ENCODE measurements at regions of chr1 and their contacts with region 1.

Region 1: GRCh38 chr1:88983791-88984559 is 8.5 kb downstream of the KYAT3 start:
- DNase-seq: peak; percentile 73
- H3K4me3 Mint-ChIP-seq: peak overlapping the region; percentile 59
- H3K27ac Mint-ChIP-seq: peak overlapping the region; percentile 87
- H3K4me1 Mint-ChIP-seq: peaks cover 37% of the 10 kb centered on the region
- H3K27me3 Mint-ChIP-seq: no peaks in the 10 kb centered on the region
- CTCF ChIP-seq: peak; percentile 53

Region 2: GRCh38 chr1:88998716-88999115 is 14.7 kb after region 1 on chr1:
- CTCF ChIA-PET with region 1: interaction called, 22 read pairs
- POLR2A ChIA-PET with region 1: interaction called, 4 read pairs
- intact Hi-C with region 1: no loop called
- DNase-seq: peak; percentile 75
- H3K4me3 Mint-ChIP-seq: no peak overlapping the region
- H3K27ac Mint-ChIP-seq: no peak overlapping the region
- H3K4me1 Mint-ChIP-seq: no peaks in the 10 kb centered on the region
- H3K27me3 Mint-ChIP-seq: no peaks in the 10 kb centered on the region
- CTCF ChIP-seq: peak; percentile 36

Region 3: DNA sequence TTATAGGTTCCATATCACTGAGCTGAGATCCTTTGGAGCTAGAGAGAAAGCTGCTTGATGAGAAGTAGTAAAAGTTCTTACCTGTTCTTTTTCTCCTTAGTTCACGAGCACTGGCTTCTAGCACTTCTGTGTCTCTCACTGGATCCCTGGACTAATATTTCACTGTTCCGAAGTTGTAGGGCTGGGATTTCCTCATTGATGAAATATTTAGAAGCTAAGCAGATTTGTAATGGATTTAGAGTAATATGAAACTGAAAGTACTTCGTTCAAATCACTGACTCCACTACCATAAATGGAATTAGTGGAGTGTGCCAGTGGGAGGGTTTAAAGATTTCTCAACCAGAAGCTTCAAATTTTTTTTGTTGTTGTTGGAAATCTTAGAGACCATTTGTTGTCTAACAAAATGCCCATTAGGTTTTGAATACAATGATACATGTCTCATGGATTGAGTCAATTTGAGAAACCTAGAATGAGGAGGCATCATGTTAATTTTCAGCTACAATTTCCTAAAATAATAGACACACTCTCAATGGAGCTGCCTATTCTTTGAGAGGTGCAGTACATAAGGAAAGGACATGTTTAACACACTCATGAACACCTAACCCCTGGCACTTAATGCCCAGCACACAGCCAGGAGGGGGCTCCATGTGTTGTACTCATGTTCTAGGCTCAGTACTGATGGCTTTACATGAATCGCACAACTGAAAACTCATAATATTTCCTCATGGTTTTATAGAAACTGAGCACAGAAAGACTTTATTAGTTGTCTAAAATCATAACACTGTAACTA is 81.3 kb after region 1 on chr1 and contains the start of gene GBP1:
- CTCF ChIA-PET with region 1: interaction called, 6 read pairs
- POLR2A ChIA-PET with region 1: interaction called, 17 read pairs
- intact Hi-C with region 1: no loop called
- DNase-seq: peak; percentile 79
- H3K4me3 Mint-ChIP-seq: peak within 1 kb of the TSS; percentile 76
- H3K27ac Mint-ChIP-seq: peak within 1 kb of the TSS; percentile 91
- H3K4me1 Mint-ChIP-seq: peaks cover 13% of the 10 kb centered on the region
- H3K27me3 Mint-ChIP-seq: no peaks in the 10 kb centered on the region
- CTCF ChIP-seq: no peak
- total RNA-seq, gene GBP1: 10.4 and 10.6 TPM in 2 replicates

Region 4: DNA sequence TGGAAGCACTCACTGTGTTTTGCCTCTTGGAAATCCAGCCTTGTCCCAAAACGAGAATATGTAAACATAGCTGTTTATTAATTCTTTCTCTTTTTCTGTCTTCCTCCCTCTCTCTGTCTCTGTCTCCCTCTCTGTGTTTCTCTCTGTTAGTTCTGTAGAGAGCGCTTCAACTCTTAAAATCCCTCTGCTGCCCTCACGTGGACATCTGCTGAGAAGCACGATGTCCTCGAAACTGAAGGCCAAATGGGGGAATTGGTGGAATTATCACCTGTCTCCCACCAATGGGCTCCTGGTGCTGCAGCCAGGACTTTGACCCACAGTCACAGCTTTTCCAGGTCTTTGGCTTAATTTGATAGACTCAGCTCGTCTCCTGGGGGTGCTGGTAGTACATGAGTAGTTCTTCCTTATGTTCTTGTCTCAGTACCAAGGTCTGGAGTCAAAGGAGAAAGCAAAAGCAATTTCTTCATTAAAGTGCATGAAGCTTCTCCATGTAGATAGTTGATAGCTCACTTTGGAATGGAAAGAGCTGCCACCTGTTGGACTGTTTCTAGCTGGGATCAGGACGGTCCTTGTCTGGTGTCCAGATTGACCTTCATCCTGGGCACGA is 374.4 kb after region 1 on chr1:
- CTCF ChIA-PET with region 1: interaction called, 20 read pairs
- POLR2A ChIA-PET with region 1: no interaction called
- intact Hi-C with region 1: no loop called
- DNase-seq: peak; percentile 81
- H3K4me3 Mint-ChIP-seq: no peak overlapping the region
- H3K27ac Mint-ChIP-seq: no peak overlapping the region
- H3K4me1 Mint-ChIP-seq: peaks cover 10% of the 10 kb centered on the region
- H3K27me3 Mint-ChIP-seq: no peaks in the 10 kb centered on the region
- CTCF ChIP-seq: peak; percentile 60

Measured in MCF 10A (cell line).